Activated T-helper 2 cell treated with anti-CD3 and anti-CD28 coated beads, Interferon-gamma antibody, Interleukin-2, Interleukin-4, amounts not matched to agents 10 μg/mL and 5 μg/mL and 100 μg/mL, durations not matched to agents 14 hours and 24 hours and 36 hours (primary cell): ENCODE measurements at regions of chr6 and their contacts with region 1.

Region 1: GRCh38 chr6:44257025-44257752 is at the start of gene SLC35B2:
- DNase-seq: peak; percentile 65
- H3K4me3 Mint-ChIP-seq: peak within 1 kb of the TSS; percentile 84
- H3K27ac Mint-ChIP-seq: peak within 1 kb of the TSS; percentile 85
- H3K4me1 Mint-ChIP-seq: peaks cover 51% of the 10 kb centered on the region
- H3K27me3 Mint-ChIP-seq: no peaks in the 10 kb centered on the region
- total RNA-seq, gene SLC35B2: 27.6 and 29.6 TPM in 2 replicates

Region 2: GRCh38 chr6:43635387-43636307 is 621.5 kb before region 1 on chr6 and contains the start of gene MAD2L1BP:
- intact Hi-C with region 1: loop called (anchors 5 kb)
- DNase-seq: peak; percentile 86
- H3K4me3 Mint-ChIP-seq: peak within 1 kb of the TSS; percentile 92
- H3K27ac Mint-ChIP-seq: peak within 1 kb of the TSS; percentile 83
- H3K4me1 Mint-ChIP-seq: peaks cover 40% of the 10 kb centered on the region
- H3K27me3 Mint-ChIP-seq: no peaks in the 10 kb centered on the region
- total RNA-seq, gene MAD2L1BP: 35.4 and 38.4 TPM in 2 replicates

Region 3: GRCh38 chr6:44172731-44173500 is 84.3 kb before region 1 on chr6:
- intact Hi-C with region 1: loop called (anchors 2 kb)
- DNase-seq: peak; percentile 62
- H3K4me3 Mint-ChIP-seq: no peak overlapping the region
- H3K27ac Mint-ChIP-seq: peak overlapping the region; percentile 9
- H3K4me1 Mint-ChIP-seq: peaks cover 18% of the 10 kb centered on the region
- H3K27me3 Mint-ChIP-seq: peaks cover 3% of the 10 kb centered on the region

Region 4: GRCh38 chr6:44234101-44235025 is 22.8 kb before region 1 on chr6:
- intact Hi-C with region 1: no loop called
- DNase-seq: no peak
- H3K4me3 Mint-ChIP-seq: no peak overlapping the region
- H3K27ac Mint-ChIP-seq: no peak overlapping the region
- H3K4me1 Mint-ChIP-seq: peaks cover 43% of the 10 kb centered on the region
- H3K27me3 Mint-ChIP-seq: no peaks in the 10 kb centered on the region

Region 5: DNA sequence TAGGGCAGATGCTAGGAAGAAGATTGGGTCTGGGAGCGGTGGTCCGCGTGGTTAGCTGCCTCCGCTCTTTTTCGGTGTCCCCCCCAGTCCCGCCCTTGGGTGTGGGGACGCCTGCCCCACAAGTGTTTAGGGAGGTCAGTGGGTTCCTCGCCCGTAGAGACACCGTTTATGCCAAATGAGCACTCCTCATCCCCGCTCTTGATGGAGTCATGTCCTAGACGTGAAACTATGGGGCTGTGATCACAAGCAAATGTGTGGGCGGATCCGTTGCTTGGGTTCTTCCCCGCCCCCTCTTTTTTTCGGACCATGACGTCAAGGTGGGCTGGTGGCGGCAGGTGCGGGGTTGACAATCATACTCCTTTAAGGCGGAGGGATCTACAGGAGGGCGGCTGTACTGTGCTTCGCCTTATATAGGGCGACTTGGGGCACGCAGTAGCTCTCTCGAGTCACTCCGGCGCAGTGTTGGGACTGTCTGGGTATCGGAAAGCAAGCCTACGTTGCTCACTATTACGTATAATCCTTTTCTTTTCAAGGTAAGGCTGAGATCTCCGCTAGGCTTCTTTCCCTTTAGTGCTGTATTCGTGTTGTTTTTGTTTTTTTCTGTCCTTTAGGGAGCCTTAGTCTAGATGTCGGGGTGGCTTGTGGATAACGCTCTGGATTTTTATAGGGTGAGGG is 10.4 kb before region 1 on chr6 and contains the start of gene HSP90AB1:
- intact Hi-C with region 1: loop called (anchors 1 kb)
- DNase-seq: peak; percentile 95
- H3K4me3 Mint-ChIP-seq: peak within 1 kb of the TSS; percentile 96
- H3K27ac Mint-ChIP-seq: peak within 1 kb of the TSS; percentile 99
- H3K4me1 Mint-ChIP-seq: peaks cover 41% of the 10 kb centered on the region
- H3K27me3 Mint-ChIP-seq: peaks cover 3% of the 10 kb centered on the region
- total RNA-seq, gene HSP90AB1: 2,402 and 2,404 TPM in 2 replicates